ENCODE measurements at regions of chr11 and their contacts with region 1.

Region 1: DNA sequence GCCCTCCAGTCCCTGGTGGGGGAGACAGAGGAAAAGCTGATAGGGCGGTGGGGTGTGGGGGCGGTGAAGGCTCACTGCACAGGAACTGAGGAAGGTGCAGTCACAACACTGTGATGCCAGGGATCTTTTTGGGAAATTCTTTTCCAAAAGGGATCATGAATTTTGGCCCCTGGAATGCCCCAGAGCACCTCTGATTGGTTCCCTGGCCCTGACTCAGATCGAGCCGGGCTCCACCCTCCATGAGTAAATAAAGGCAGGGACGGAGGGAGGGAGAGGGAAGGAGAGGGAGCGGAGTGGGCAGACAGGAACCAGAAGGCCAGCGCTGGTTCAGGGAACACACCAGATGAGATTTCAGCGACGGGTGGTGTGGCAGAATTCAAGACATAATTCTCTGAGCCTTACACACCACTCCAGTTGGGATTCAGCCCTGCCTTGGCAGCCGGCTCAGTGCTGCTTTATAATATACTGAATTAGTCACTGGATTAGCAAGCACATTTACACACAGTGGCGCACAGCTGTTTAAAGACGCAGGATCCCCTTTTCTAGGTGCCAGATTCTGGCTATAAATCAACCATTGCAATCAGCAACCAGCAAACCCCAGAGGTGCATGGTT is 80.3 kb downstream of the ETS1 start:
- DNase-seq: peak; percentile 69 to 91 (median 83)
- ATAC-seq: peak; percentile 79 to 96 (median 88)
- H3K4me3 ChIP-seq: peak overlapping the region in 11 of 12 donors; percentile 4 to 47 (median 37)
- H3K27ac ChIP-seq: peak overlapping the region; percentile 60 to 96 (median 80)
- H3K4me1 ChIP-seq: peaks cover 24 to 100% (median 100%) of the 10 kb centered on the region in 12 donors
- H3K27me3 ChIP-seq: no peaks in the 10 kb centered on the region
- CTCF ChIP-seq: no peak
- POLR2A ChIP-seq: peak in 1 of 2 donors; percentile 75

Region 2: DNA sequence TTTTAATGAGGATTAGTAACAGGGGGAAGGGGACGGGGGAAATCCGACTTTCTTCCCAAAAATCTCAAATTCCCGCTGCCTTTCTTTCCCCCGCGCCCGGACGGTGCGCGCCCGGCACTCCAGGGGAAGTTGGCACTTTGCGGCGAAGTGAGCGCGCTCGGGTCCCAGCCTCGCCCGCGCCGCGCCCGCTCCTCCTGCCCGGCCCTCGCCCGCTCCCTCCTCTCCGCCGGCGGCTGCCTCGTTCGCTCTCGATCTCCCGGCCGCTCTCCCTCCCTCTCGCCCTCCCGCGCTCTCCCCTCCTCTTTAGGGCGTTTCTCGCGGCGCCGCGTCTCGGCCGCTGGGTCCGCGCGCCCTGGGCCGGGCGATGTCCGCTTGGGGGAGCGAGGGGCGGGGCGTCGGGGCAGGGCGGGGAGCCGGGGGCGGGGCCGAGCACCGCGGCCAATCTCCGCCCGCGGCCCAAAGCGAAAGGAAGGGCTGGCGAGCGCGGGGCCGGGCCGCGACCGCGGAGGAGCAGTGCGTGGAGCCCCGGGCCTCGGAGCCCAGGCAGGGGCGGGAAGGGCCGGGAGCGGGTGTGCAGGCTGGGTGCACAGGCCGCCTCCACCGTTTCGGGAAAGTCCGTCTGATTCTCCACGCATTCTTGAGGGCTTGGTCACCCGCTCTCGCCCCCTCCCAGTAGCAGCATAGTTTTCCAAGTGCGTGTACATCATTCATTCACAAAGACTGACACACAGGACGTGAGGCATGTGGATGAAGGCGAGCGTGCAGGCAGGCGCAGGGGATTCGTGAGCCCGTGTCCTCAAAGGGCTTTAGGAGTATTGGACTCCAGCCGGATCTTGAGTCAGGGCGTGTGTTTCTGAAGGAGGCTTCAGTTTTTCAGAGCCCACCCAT is 15.2 kb after region 1 on chr11:
- intact Hi-C with region 1: loop called in 1 of 10 experiments (anchors 2 kb)
- DNase-seq: peak; percentile 95 to 97 (median 96)
- ATAC-seq: peak; percentile 93 to 99 (median 96)
- H3K4me3 ChIP-seq: peak overlapping the region; percentile 63 to 93 (median 83)
- H3K27ac ChIP-seq: peak overlapping the region; percentile 94 to 98 (median 96)
- H3K4me1 ChIP-seq: peaks cover 8 to 74% (median 42%) of the 10 kb centered on the region in 12 donors
- H3K27me3 ChIP-seq: no peaks in the 10 kb centered on the region
- CTCF ChIP-seq: peak in 1 of 12 donors; percentile 5
- POLR2A ChIP-seq: peak; percentile 79 to 97